ENCODE measurements at regions of chr4 and their contacts with region 1.

Region 1: DNA sequence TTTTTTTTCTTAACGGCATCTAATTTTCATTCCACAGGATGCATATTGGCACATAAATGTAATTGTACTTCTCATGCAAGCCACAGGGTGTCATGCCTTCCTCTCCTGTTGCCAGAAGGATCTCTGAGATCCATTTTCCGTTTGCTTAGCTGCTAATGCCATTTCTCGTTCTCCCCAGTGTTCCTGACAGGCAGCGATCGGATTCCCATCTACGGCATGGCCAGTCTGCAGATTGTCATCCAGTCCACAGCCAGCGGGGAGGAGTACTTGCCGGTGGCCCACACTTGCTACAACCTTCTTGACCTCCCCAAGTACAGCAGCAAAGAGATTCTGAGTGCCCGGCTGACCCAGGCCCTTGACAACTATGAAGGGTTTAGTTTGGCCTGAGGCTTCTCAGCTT is 8.9 kb upstream of the NAP1L5 start:
- DNase-seq: peak in 1 of 2 donors; percentile 20
- ATAC-seq: peak; percentile 64 to 92 (median 90)
- H3K4me3 ChIP-seq: no peak overlapping the region
- H3K27ac ChIP-seq: peak overlapping the region in 8 of 10 donors; percentile 20 to 63 (median 36)
- H3K4me1 ChIP-seq: peaks cover 0 to 14% (median 8%) of the 10 kb centered on the region in 9 donors
- H3K27me3 ChIP-seq: no peaks in the 10 kb centered on the region
- CTCF ChIP-seq: peak; percentile 28 to 77 (median 63)

Region 2: GRCh38 chr4:88481537-88481936 is 225.0 kb before region 1 on chr4:
- intact Hi-C with region 1: no loop called
- DNase-seq: no peak
- ATAC-seq: peak in 4 of 8 donors; percentile 50 to 75 (median 64)
- H3K4me3 ChIP-seq: no peak overlapping the region
- H3K27ac ChIP-seq: peak overlapping the region in 3 of 10 donors; percentile 12 to 59 (median 45)
- H3K4me1 ChIP-seq: peaks cover 0 to 7% (median 0%) of the 10 kb centered on the region in 9 donors
- H3K27me3 ChIP-seq: no peaks in the 10 kb centered on the region
- CTCF ChIP-seq: no peak

Region 3: DNA sequence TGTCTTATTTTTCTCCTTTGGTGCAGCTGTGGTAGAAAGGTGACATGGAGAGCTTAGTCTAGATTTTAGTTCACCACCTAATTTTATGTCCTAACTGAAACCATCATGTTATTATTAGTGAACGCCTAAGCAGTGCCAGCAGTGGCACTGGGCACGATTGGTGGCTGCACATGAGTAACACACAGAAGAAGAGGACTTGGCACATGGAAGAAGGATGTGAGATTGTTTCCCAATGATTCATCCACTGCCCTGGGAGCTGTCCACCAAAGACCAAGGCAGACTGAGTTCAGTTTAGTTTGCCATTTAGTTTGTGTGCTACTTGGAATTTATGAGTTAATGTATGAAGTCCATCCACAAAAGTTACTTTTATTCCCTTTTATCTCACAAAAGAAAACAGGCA is 59.2 kb after region 1 on chr4:
- intact Hi-C with region 1: loop called in 1 of 10 experiments (anchors 5 kb)
- DNase-seq: peak; percentile 33 to 58
- ATAC-seq: peak; percentile 92 to 100 (median 98)
- H3K4me3 ChIP-seq: no peak overlapping the region
- H3K27ac ChIP-seq: peak overlapping the region in 6 of 10 donors; percentile 29 to 67 (median 34)
- H3K4me1 ChIP-seq: peaks cover 0 to 17% (median 5%) of the 10 kb centered on the region in 9 donors
- H3K27me3 ChIP-seq: no peaks in the 10 kb centered on the region
- CTCF ChIP-seq: no peak

Region 4: DNA sequence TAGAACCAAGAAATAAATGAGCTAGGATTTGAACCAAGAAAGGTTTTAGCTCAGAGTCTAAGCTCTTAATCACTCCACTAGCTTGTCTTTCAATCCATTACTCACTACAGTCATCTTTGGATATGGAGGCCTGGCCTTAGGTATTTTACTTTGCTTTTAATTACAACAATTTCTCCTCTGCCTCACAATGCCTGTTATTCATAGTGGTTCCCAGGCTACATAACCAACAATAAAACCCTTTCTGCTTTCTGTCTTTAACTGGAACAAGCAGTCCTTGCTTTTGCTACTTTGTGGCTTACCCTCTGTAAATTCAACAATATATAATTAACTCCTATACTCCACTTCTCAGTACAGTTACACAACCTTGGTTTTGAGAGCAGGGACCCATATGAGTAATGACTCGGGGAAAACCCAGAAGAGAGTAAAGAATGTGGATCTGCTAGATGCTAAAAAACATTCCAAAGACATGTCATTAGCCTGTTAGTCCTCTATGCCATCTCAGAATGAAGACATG is 85.8 kb after region 1 on chr4:
- intact Hi-C with region 1: loop called in 8 of 10 experiments (anchors 5 to 10 kb)
- DNase-seq: no peak
- ATAC-seq: peak in 1 of 8 donors; percentile 33
- H3K4me3 ChIP-seq: no peak overlapping the region
- H3K27ac ChIP-seq: peak overlapping the region in 1 of 10 donors; percentile 22
- H3K4me1 ChIP-seq: peaks cover 0 to 26% (median 0%) of the 10 kb centered on the region in 9 donors
- H3K27me3 ChIP-seq: no peaks in the 10 kb centered on the region
- CTCF ChIP-seq: no peak

Region 5: DNA sequence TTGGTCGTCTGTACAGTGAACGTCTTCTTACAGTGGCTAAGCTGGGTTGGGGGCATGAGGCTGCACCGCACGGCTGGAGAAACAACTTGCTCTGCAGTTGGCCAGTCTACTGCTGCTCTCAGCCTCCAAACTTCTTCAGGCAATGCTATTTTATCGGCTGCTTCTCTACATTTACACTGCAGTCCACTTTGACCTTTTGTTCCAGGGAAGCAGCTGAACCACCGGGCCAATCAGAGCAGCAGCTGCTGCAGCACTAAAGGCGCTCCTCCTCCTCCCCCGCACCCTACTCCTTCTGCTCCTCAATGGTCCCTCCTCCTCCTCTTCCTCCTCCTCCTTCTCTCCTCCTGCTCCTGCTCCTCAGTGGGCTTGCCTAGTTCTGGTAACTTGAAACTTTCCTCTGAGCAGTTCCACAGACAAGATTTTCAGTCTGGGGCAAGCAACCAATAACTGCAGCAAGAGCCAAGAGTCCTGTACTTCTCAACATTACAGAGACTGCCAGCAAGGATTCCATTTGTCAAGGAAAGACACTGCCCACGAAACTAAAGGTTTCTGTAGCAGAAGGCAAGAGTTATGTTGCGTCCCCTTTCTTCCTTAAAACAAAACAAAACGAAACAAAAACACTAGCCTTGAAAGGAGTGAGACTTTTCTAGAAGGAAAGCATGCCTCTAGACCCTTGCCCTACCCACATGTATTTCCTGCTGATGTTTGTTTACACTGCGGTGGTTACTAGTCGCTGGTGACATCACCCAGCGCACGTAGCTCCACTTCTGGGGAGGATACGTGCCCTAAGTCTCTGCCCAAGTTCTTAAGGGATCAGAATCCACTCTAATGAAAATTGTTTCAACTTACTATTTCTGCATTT is 116.7 kb after region 1 on chr4:
- intact Hi-C with region 1: loop called in 1 of 10 experiments (anchors 5 kb)
- DNase-seq: peak; percentile 82 to 93
- ATAC-seq: peak; percentile 96 to 98 (median 97)
- H3K4me3 ChIP-seq: peak overlapping the region; percentile 37 to 68 (median 60)
- H3K27ac ChIP-seq: peak overlapping the region; percentile 74 to 88 (median 84)
- H3K4me1 ChIP-seq: peaks cover 0 to 61% (median 37%) of the 10 kb centered on the region in 9 donors
- H3K27me3 ChIP-seq: no peaks in the 10 kb centered on the region
- CTCF ChIP-seq: no peak

Region 6: DNA sequence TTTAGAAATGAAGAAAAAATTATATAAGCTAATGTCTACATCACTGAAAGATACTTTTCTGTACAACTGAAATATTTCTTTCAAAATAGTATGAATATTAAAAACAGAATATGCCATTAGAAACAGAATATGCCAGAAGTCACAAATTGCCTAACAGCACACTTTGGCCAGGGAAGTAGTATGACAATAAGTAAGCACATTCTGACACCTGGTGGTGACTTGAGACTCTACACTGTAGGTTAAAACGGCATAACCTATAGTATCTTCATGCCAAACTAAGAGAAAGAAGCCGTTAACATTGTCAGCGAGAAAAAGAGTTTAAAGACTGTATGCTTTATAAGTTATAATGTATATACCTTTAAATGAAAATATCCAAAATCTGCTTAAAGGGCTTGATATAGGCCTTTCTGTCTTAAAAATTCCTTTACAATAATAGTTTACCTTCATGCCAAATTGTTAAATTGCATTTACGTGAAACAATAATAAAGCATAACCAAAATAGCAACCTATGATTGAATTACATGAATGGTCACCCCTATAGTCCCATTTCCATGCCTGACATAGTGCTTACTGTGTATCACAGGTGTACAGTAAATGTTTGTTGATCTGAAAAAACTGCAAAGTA is 317.6 kb after region 1 on chr4:
- intact Hi-C with region 1: loop called in 9 of 10 experiments (anchors 1 to 10 kb)
- DNase-seq: peak in 1 of 2 donors; percentile 68
- ATAC-seq: peak; percentile 78 to 97 (median 95)
- H3K4me3 ChIP-seq: no peak overlapping the region
- H3K27ac ChIP-seq: no peak overlapping the region
- H3K4me1 ChIP-seq: peaks cover 0 to 23% (median 7%) of the 10 kb centered on the region in 9 donors
- H3K27me3 ChIP-seq: no peaks in the 10 kb centered on the region
- CTCF ChIP-seq: peak; percentile 57 to 92 (median 86)

Region 7: DNA sequence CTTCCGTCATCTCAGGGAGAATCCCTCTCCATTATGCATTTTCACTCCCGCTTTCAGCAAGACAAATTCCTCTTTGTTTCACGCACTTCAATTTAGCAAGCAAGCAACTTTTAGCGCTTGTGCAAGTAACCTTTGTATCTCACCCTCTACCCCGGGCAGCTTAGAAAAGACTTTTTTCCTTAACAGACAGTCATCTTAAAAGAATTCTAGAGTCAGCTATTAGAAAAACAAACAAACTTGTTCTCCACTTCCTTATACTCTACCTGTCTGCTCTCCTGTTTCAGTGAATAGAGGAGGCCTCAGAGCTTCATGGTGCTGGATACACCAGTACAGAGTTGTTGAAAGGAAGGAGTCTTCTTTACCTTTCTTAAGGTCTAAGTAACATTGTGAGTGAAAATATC is 416.9 kb after region 1 on chr4:
- intact Hi-C with region 1: no loop called
- DNase-seq: no peak
- ATAC-seq: no peak
- H3K4me3 ChIP-seq: no peak overlapping the region
- H3K27ac ChIP-seq: no peak overlapping the region
- H3K4me1 ChIP-seq: no peaks in the 10 kb centered on the region
- H3K27me3 ChIP-seq: no peaks in the 10 kb centered on the region
- CTCF ChIP-seq: no peak

Measured in heart right ventricle (tissue), 16 donors.